ENCODE measurements at regions of chr7 and their contacts with region 1.

Region 1: GRCh38 chr7:128135515-128136214 is 104.4 kb upstream of the LRRC4 start:
- DNase-seq: peak; percentile 60
- ATAC-seq: peak; percentile 98
- H3K4me3 Mint-ChIP-seq: peak overlapping the region; percentile 69
- H3K27ac Mint-ChIP-seq: no peak overlapping the region
- H3K4me1 Mint-ChIP-seq: peaks cover 14% of the 10 kb centered on the region
- H3K27me3 Mint-ChIP-seq: peaks cover 51% of the 10 kb centered on the region

Region 2: GRCh38 chr7:127708788-127709187 is 426.9 kb before region 1 on chr7:
- CTCF ChIA-PET with region 1: interaction called, 21 read pairs
- POLR2A ChIA-PET with region 1: no interaction called
- DNase-seq: peak; percentile 85
- ATAC-seq: peak; percentile 84
- H3K4me3 Mint-ChIP-seq: no peak overlapping the region
- H3K27ac Mint-ChIP-seq: no peak overlapping the region
- H3K4me1 Mint-ChIP-seq: no peaks in the 10 kb centered on the region
- H3K27me3 Mint-ChIP-seq: no peaks in the 10 kb centered on the region

Region 3: DNA sequence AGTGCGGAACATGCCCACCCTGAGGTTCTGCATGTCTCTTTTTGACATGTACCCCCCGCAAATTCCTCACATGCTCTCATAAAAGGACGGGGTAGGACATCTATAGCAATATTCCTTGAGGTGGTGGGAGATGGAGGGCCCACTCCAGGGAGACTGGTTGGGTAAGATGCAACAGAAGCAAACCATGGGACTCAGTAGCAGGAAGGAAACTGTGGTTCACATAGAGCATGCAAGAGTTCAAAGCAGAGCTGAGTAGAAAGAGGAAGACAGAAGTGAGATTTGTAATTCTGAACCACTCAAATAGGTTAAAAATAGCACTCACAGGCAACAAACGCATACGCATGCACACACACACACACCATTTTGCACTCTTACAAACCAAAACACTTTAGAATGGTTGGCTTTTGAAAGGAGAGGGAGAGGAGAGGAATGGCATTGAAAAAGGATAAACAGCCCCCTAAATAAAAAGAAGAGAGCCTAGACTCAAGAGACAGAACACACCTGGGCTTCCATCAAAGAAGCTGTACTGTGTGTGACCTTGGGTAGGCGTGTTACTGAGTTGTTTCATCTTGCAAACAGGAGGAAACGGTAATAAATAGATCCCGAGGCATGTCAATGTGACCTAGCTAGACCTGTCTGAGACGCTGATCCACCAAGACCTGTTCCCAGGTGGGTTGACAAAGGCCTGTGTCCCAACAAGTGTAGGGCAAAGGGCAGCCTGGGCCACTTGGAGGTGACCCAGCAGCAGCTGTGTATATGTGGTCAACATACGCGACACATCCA is 26.8 kb before region 1 on chr7:
- CTCF ChIA-PET with region 1: interaction called, 14 read pairs
- POLR2A ChIA-PET with region 1: interaction called, 3 read pairs
- DNase-seq: peak; percentile 57
- ATAC-seq: peak; percentile 78
- H3K4me3 Mint-ChIP-seq: peak overlapping the region; percentile 55
- H3K27ac Mint-ChIP-seq: peak overlapping the region; percentile 94
- H3K4me1 Mint-ChIP-seq: peaks cover 80% of the 10 kb centered on the region
- H3K27me3 Mint-ChIP-seq: no peaks in the 10 kb centered on the region

Region 4: DNA sequence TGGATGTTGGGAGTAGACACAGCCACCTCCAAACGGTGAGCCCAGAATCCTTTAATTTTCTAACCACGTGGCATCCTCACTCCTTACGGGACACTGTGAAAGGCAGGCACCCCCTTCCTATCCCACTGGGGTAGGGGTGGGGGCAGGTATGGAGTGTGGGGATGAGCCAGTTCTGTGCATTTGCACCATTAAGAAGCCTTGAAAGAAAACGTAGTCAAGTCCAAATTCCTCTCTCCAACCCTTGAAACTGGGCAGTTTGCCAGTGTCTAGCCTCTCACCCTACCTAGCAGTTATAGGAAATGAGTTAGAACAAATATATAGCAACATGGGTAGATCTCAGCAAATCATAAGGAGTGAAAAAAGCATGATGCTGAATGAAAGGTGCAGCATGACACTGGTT is 13.0 kb after region 1 on chr7:
- CTCF ChIA-PET with region 1: interaction called, 11 read pairs
- POLR2A ChIA-PET with region 1: no interaction called
- DNase-seq: peak; percentile 4
- ATAC-seq: no peak
- H3K4me3 Mint-ChIP-seq: no peak overlapping the region
- H3K27ac Mint-ChIP-seq: no peak overlapping the region
- H3K4me1 Mint-ChIP-seq: no peaks in the 10 kb centered on the region
- H3K27me3 Mint-ChIP-seq: peaks cover 42% of the 10 kb centered on the region

Region 5: DNA sequence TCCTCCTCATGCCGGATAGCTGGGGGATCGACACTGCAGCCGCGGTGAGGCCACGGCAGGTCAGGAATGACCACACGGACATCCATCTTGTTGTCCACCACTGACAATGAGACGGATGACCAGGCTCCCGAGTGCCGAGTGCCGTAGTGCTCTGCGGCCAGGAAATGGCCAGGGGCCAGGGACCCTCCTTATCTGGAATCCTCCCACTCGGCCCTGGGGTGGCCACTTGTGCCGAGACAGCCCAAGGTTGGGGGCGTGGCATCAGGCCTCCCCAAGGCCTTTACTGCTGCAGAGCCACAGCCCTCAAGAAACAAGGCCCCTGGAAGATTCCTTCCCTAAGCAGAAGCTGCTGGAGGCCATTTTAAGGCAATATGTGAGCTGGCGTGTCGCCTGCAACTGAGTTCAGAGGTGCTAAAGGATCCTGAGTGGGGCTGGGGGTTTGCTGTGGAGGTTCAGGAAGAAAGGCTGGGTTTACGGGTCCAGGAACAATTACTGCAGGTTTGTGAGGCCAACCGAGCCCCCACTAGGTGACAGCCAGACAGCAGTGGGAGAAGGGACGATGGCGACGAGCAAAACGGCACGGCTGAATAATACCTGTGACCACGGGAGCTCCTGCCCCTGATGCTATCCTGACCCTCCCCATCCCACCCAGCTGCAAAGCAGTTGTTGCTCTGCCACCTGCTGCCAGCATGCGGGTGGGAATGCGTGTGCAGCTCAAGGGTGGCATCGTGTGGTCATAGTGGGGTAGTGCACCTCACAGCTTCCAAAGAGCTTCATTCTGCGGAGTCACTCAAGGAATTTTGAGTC is 73.8 kb after region 1 on chr7:
- CTCF ChIA-PET with region 1: interaction called, 80 read pairs
- POLR2A ChIA-PET with region 1: interaction called, 4 read pairs
- DNase-seq: peak; percentile 74
- ATAC-seq: peak; percentile 84
- H3K4me3 Mint-ChIP-seq: no peak overlapping the region
- H3K27ac Mint-ChIP-seq: no peak overlapping the region
- H3K4me1 Mint-ChIP-seq: no peaks in the 10 kb centered on the region
- H3K27me3 Mint-ChIP-seq: peaks cover 14% of the 10 kb centered on the region

Measured in activated CD8-positive, alpha-beta T cell treated with anti-CD3 and anti-CD28 coated beads, Interleukin-2, amount 10 ng/mL, durations not matched to agents 7 days and 5 days (primary cell).